Activated naive CD4-positive, alpha-beta T cell treated with anti-CD3 and anti-CD28 coated beads for 36 hours (primary cell): ENCODE measurements at regions of chr1 and their contacts with region 1.

Region 1: DNA sequence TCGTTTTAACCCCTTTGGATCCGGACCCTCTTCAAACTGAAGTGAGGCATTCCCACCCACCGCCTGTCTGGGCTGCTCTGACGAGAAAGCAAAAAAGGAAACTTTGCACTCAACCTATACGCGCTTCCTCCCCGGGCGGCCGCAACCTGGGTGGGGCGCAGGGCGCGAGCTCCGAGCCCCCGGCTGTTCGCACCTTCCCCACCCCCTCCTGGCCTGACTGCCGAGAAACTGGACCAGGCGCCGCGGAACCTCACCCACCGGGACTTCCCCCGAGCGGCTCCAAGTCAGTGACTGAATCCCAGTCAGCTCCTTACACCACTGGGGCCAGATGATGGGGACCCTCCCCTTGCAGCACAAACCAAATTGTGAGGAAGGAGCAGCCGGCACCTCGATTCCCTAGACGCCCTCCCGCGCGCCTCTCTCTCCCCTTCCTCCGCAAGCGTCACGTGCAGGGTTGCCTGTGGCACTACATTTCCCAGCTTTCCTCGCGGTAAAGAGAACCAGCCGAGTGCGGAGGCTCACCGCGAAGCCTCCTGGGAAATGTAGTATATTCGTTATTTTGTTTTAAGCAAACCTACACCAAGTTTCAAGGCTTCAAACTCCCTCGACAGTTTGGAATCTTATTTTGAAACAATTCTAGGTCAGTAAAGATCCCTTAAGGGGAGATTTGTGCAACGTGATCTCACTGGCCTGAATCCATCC is at the start of gene RAB29:
- DNase-seq: peak; percentile 93
- H3K4me3 Mint-ChIP-seq: peak within 1 kb of the TSS; percentile 83
- H3K27ac Mint-ChIP-seq: peak within 1 kb of the TSS; percentile 94
- H3K4me1 Mint-ChIP-seq: peaks cover 53% of the 10 kb centered on the region
- H3K27me3 Mint-ChIP-seq: no peaks in the 10 kb centered on the region
- total RNA-seq, gene RAB29: 25.0 TPM

Region 2: GRCh38 chr1:205313563-205314308 is 461.4 kb before region 1 on chr1:
- CTCF ChIA-PET with region 1: no interaction called
- intact Hi-C with region 1: loop called (anchors 10 kb)
- DNase-seq: peak; percentile 77
- H3K4me3 Mint-ChIP-seq: peak overlapping the region; percentile 80
- H3K27ac Mint-ChIP-seq: peak overlapping the region; percentile 93
- H3K4me1 Mint-ChIP-seq: peaks cover 85% of the 10 kb centered on the region
- H3K27me3 Mint-ChIP-seq: no peaks in the 10 kb centered on the region

Region 3: GRCh38 chr1:205711104-205712020 is 63.8 kb before region 1 on chr1:
- CTCF ChIA-PET with region 1: interaction called, 18 read pairs
- intact Hi-C with region 1: loop called (anchors 2 kb)
- DNase-seq: peak; percentile 85
- H3K4me3 Mint-ChIP-seq: no peak overlapping the region
- H3K27ac Mint-ChIP-seq: peak overlapping the region; percentile 56
- H3K4me1 Mint-ChIP-seq: peaks cover 22% of the 10 kb centered on the region
- H3K27me3 Mint-ChIP-seq: no peaks in the 10 kb centered on the region

Region 4: DNA sequence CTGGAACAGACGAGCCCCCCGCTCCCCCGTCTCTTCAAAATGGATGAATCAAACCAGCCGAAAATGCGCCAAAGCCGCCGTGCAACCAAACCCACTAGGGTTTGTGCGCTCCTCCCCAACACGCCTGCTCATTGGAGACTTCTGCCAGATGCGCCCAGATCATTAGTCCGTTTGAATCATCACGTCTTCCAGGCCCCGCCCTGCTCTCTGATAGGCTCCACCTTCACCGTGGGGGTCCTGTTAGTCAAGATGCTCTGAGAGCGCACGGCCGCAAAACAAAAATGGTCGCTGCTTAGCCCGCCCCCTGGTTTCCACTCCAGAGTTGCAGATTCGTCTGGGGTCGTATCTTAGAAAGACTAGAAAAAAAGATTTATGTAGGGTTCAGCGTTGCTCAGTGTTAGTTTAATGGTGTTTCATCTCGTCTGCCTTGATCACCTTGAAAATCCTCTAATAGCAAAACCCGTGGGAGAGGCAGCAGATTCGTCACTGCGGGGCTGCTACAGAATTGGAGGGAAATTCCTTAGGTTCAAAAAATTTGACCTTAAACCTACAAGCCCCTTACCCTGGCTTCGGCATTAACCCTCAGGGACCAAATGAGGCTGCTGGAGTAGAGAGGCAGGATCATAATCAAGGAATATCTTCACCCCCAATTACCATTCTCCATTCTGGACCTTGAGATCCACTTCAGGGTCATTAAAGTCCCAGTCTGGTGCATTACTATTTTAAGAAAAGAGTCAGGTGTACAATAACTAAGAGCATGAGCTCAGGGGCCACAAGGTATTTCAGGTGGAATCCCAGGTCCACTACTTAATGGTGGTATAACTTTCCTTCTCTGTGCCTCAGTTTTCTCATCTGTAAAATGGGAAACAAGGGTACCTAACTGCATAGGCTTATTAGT is 24.8 kb before region 1 on chr1 and contains the start of gene NUCKS1:
- CTCF ChIA-PET with region 1: interaction called, 13 read pairs
- intact Hi-C with region 1: loop called (anchors 1 kb)
- DNase-seq: peak; percentile 99
- H3K4me3 Mint-ChIP-seq: peak within 1 kb of the TSS; percentile 95
- H3K27ac Mint-ChIP-seq: peak within 1 kb of the TSS; percentile 100
- H3K4me1 Mint-ChIP-seq: peaks cover 30% of the 10 kb centered on the region
- H3K27me3 Mint-ChIP-seq: no peaks in the 10 kb centered on the region
- total RNA-seq, gene NUCKS1: 215 to 218 TPM

Region 5: GRCh38 chr1:205805082-205805712 is 30.0 kb after region 1 on chr1:
- CTCF ChIA-PET with region 1: no interaction called
- intact Hi-C with region 1: loop called (anchors 1 kb)
- DNase-seq: peak; percentile 87
- H3K4me3 Mint-ChIP-seq: peak overlapping the region; percentile 58
- H3K27ac Mint-ChIP-seq: peak overlapping the region; percentile 83
- H3K4me1 Mint-ChIP-seq: peaks cover 62% of the 10 kb centered on the region
- H3K27me3 Mint-ChIP-seq: no peaks in the 10 kb centered on the region

Region 6: DNA sequence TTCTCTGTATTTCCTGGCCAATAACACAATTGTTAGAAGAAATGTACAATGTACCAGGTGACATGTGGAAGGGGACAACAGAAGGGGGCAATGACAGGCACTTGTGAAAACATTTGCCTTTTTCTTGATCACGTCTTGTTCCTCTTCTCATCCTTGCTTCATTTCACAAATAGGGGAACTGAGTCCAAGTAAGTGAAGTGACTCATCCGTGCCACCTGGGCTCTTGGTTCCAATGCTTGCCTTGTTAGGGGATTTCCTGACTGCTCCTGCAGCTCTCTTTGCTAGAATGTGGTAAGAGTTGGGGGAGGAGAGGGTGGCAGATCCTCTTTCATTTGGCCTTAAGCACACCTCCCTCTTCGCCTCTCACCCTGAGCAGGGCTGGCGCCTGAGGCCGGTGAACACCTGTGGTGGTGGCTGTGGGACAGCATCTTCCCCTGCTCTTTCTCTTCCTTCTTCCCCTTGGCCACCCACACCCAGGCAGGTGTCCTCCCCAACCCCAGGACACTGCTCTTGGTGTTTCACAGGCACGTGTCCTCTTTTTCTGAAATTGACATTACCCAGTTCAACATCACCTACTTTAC is 275.6 kb after region 1 on chr1:
- CTCF ChIA-PET with region 1: no interaction called
- intact Hi-C with region 1: loop called (anchors 2 kb)
- DNase-seq: peak; percentile 87
- H3K4me3 Mint-ChIP-seq: no peak overlapping the region
- H3K27ac Mint-ChIP-seq: peak overlapping the region; percentile 60
- H3K4me1 Mint-ChIP-seq: peaks cover 47% of the 10 kb centered on the region
- H3K27me3 Mint-ChIP-seq: peaks cover 11% of the 10 kb centered on the region

Region 7: GRCh38 chr1:206556750-206557635 is 781.8 kb after region 1 on chr1:
- CTCF ChIA-PET with region 1: no interaction called
- intact Hi-C with region 1: no loop called
- DNase-seq: peak; percentile 92
- H3K4me3 Mint-ChIP-seq: peak overlapping the region; percentile 96
- H3K27ac Mint-ChIP-seq: peak overlapping the region; percentile 100
- H3K4me1 Mint-ChIP-seq: peaks cover 61% of the 10 kb centered on the region
- H3K27me3 Mint-ChIP-seq: no peaks in the 10 kb centered on the region